Posterior cingulate gyrus (tissue), 11 donors: ENCODE measurements at regions of chr2 and their contacts with region 1.

Region 1: GRCh38 chr2:102520028-102520427 is 47.0 kb downstream of the SLC9A4 start:
- DNase-seq: no peak

Region 2: DNA sequence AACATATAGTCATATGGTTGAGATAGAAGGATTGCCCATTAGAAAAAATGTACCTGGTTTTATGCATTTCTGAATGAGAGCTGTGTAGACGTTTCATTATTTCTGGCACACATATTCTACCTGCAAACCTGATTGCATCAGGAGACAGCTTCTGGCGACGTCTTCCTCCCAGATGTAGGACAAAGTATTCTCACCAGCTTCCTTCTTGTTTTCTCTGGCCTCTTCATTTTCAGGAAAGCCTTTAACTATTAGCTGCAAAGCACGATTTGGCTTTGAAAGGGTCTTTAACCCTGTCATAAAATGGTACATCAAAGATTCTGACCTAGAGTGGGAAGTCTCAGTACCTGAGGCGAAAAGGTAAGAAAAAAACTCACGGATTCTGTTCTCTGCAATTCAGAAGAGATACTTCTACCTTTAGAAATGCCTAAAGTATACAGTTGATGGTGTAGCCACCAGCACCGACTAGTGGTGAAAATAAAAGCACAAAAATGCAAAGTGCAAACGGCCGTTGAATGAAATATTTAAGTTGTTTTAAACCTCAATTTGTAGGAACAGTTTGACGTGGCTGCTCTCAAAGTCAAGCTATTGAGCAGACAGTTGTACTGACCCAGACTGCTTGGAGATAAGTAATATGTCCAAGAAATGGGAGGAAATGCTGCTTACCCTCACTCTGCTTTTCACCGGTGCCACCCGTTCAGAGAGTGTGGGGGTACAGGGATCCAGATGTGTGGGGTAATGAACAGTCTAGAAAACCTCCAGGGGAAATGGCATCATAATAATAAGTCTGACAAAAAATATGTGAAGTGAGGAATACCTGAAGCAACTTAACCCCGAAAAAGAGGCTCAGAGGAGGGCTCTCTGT is 76.8 kb before region 1 on chr2:
- intact Hi-C with region 1: no loop called
- DNase-seq: peak in 2 of 10 donors; percentile 15 to 20

Region 3: GRCh38 chr2:102460467-102460866 is 59.6 kb before region 1 on chr2:
- intact Hi-C with region 1: no loop called
- DNase-seq: no peak

Region 4: DNA sequence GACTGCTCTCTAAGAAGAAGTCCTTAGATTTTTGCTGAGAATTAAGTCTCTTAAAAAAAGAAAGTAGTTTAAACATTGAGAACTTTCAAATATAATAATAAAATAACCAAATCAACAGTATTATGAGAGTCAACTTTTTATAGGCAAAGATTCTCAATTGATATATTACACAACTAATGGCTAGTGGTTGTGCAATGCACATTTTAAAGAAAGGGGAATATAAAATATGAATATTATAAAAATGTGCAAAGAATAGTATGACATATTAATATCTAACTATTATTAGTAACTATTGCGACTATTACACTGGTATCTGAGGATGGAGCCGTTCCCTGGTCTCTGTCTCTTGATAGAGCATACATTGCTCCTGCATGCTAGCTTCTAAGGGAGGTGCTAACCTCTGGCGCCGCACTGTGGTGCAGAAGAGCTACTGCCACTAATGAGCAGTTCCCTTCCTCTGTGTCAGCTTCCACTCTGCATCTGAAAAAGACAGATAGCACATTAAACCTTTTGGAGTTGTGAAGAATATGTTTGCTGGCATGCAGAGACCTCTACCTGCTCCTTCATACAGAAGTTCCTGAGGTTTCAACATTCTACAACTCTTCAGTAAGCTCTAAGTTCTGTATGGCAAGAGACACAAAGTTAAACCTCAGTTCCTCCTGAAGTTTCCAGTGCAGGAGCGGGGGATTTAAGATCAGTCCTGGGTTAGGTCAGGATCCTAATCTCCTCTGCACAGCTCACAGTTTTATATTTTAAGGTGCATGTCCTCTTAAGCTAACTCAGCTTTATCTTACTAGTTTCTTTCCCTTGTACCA is 95.8 kb after region 1 on chr2:
- intact Hi-C with region 1: loop called (anchors 10 kb)
- DNase-seq: peak in 9 of 10 donors; percentile 34 to 94 (median 61)

Region 5: DNA sequence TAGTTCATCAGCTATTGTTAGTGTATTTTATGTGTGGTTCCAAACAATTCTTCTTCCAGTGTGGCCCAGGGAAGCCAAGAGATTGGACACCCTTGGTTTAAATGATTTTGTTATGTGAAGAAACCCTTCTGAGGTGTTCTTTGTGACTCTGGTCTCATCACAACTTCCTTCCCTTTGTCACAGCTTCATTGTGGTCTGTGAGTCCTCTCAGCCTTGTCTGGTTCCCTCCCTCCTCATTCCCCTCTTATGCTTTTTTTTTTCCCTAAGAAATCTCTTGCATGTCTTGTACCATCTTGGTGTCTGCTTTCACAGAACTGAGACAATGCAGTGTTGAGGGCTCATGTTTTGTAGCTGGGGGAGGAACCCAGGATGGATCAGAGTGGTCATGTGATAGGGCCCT is 360.7 kb after region 1 on chr2:
- intact Hi-C with region 1: no loop called
- DNase-seq: no peak